ENCODE measurements at regions of chr7 and their contacts with region 1.

Region 1: GRCh38 chr7:73628504-73628903 is 4.2 kb upstream of the MLXIPL start:
- DNase-seq: no peak
- ATAC-seq: no peak
- H3K4me3 ChIP-seq: no peak overlapping the region
- H3K27ac ChIP-seq: no peak overlapping the region
- H3K4me1 ChIP-seq: no peaks in the 10 kb centered on the region
- H3K27me3 ChIP-seq: no peaks in the 10 kb centered on the region
- CTCF ChIP-seq: no peak

Region 2: DNA sequence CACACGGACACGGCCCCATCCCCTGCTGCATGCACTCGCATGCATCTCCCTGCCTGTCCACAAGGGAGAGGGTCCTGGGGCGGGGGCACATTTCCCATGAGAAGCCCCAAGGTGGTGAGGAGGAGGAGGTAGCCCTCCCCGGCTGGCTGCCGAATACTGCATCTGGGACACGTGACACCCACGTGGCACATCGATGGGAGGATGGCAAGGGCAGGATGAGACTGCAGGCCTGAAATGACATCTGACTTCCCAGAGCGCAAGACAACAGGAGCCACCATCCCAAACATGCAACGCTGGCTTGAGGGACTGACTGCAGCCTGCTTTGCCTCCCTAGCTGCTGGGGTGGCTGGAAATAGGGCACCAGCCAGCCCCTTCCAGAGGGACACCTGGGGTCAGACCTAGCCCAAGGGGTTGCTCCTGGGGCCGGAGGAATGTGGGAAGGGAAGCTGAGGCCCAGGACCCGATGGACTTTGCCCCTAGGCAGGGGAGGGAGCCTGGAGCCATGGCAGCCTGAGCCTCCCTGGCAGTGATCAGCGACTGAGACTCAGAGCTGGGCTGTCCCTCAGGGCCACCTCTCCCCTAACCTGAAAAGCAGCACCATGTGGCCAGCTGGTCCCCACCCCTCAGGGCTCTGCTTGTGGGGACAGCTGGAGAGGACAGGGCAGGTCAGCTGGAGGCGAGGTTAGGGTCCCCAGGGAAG is 71.0 kb after region 1 on chr7:
- CTCF ChIA-PET with region 1: interaction called, 10 read pairs
- POLR2A ChIA-PET with region 1: interaction called, 4 read pairs
- in situ Hi-C with region 1: no loop called
- intact Hi-C with region 1: no loop called
- DNase-seq: no peak
- ATAC-seq: peak; percentile 13
- H3K4me3 ChIP-seq: no peak overlapping the region
- H3K27ac ChIP-seq: peak overlapping the region; percentile 80
- H3K4me1 ChIP-seq: peaks cover 49% of the 10 kb centered on the region
- H3K27me3 ChIP-seq: no peaks in the 10 kb centered on the region
- CTCF ChIP-seq: no peak

Region 3: DNA sequence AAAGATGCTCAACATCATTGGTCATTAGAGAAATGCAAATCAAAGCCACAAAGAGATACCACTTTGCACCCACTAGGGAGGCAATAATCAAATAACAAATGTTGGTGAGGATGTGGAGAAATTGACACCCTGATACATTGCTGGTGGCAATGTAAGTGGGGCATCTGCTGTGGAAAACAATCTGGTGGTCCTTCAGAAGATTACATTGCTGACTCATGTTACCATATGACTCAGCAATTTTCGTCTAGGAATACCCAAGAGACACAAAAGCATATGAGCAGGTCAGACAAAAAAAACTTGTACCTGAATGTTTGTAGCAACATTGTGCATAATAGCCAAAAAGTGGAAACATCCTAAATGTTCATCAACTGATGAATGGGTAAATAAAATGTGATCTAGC is 146.4 kb after region 1 on chr7:
- CTCF ChIA-PET with region 1: interaction called, 10 read pairs
- POLR2A ChIA-PET with region 1: no interaction called
- in situ Hi-C with region 1: no loop called
- intact Hi-C with region 1: no loop called
- DNase-seq: no peak
- ATAC-seq: no peak
- H3K4me3 ChIP-seq: no peak overlapping the region
- H3K27ac ChIP-seq: no peak overlapping the region
- H3K4me1 ChIP-seq: no peaks in the 10 kb centered on the region
- H3K27me3 ChIP-seq: no peaks in the 10 kb centered on the region
- CTCF ChIP-seq: no peak

Region 4: DNA sequence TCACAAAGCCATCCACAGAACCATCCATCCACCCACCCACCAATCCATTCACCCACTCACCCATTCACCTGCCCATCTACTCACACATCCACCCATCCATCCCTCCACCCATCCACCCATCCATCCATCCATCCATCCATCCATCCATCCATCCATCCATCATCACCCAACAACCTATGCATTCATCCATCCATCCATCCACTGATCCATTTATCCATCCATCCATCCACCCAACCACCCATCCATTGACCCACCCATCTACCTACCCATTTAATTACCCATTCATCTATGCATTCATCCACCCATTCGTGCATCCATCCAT is 237.9 kb after region 1 on chr7:
- CTCF ChIA-PET with region 1: no interaction called
- POLR2A ChIA-PET with region 1: no interaction called
- in situ Hi-C with region 1: no loop called
- intact Hi-C with region 1: no loop called
- DNase-seq: no peak
- ATAC-seq: no peak
- H3K4me3 ChIP-seq: no peak overlapping the region
- H3K27ac ChIP-seq: no peak overlapping the region
- H3K4me1 ChIP-seq: peaks cover 8% of the 10 kb centered on the region
- H3K27me3 ChIP-seq: no peaks in the 10 kb centered on the region
- CTCF ChIP-seq: no peak

Measured in Panc1 (cell line).